ENCODE measurements at regions of chr21 and their contacts with region 1.

Region 1: GRCh38 chr21:22554690-22555316 is 1556.6 kb downstream of the NCAM2 start:
- DNase-seq: no peak
- ATAC-seq: no peak

Region 2: DNA sequence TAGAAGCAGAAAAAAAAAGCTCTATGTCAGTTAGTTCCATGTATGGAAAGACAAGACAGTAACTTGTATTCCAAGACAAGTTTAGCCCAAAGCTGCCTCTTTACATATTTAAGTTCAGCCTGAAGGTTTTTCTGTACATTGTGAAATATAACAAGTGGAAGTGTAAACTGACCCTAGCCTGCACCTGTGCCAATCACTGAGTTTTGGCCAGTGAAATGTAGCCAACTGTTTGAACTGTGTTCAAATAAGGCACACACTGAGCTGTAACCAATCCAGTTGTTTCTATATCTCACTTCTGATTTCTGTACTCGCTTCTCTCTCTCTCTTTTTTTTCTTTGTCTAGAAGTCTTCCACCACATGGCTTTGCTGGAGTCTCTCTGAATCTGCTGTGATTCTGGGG is 329.5 kb before region 1 on chr21:
- intact Hi-C with region 1: loop called (anchors 5 kb)
- DNase-seq: no peak
- ATAC-seq: no peak

Region 3: GRCh38 chr21:22609802-22610201 is 55.0 kb after region 1 on chr21:
- intact Hi-C with region 1: no loop called
- DNase-seq: no peak
- ATAC-seq: no peak

Region 4: DNA sequence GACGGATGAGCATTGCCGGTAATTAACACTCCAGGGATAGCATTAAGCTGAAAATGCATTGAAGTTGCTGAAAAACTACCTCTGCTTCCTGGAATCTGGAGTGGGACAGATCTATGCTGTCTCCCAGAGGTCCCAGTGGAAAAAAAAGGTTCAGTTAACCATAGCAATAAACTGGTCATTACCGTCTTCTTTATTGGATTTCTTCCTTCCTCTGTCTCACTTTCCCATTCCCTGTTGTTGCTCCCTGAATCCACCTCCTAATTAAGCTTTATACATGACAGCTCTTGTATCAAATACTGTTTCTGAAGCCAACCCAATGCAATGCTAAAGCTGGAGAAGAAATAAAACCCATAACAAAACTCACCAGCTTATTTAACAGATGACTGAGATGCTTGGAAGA is 249.3 kb after region 1 on chr21:
- intact Hi-C with region 1: no loop called
- DNase-seq: no peak
- ATAC-seq: no peak

Region 5: DNA sequence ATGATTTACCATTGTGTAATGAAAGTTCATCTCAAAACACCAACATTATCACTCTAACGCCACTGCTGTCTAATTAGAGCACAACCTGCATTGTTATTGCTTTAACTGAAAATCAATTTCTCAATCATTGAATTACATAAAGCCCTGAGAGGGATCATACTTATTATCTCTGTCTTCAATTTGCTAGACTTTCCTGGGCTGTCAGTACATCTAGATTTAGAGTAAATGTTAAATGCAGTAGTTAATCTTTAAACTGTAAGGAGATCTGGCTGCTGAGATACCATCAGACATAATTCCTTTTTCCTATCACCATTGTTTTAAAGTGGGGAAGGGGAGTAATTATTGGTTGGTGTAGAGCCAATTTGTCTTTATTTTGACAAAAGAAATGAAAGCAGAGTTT is 1057.4 kb after region 1 on chr21:
- intact Hi-C with region 1: no loop called
- DNase-seq: no peak
- ATAC-seq: no peak